ENCODE measurements at regions of chr20 and their contacts with region 1.

Region 1: GRCh38 chr20:59042796-59043660 is 442 bp upstream of the PRELID3B start:
- DNase-seq: peak; percentile 88
- H3K4me3 ChIP-seq: peak overlapping the region; percentile 45 to 84 (median 76)
- H3K27ac ChIP-seq: peak overlapping the region; percentile 64
- H3K4me1 ChIP-seq: peaks cover 20% of the 10 kb centered on the region
- H3K27me3 ChIP-seq: no peaks in the 10 kb centered on the region
- CTCF ChIP-seq: no peak

Region 2: GRCh38 chr20:59006864-59007664 is 36.0 kb before region 1 on chr20 and contains the start of gene CTSZ:
- CTCF ChIA-PET with region 1: no interaction called
- dilution Hi-C with region 1: loop called (anchors 5 kb)
- in situ Hi-C with region 1: no loop called
- intact Hi-C with region 1: no loop called
- DNase-seq: peak; percentile 13
- H3K4me3 ChIP-seq: peak within 1 kb of the TSS; percentile 53 to 70 (median 58)
- H3K27ac ChIP-seq: peak within 1 kb of the TSS; percentile 40
- H3K4me1 ChIP-seq: peaks cover 44% of the 10 kb centered on the region
- H3K27me3 ChIP-seq: no peaks in the 10 kb centered on the region
- CTCF ChIP-seq: peak in 1 of 2 donors; percentile 2
- total RNA-seq, gene CTSZ: 138 to 139 TPM

Region 3: GRCh38 chr20:59082077-59082740 is 39.2 kb after region 1 on chr20:
- CTCF ChIA-PET with region 1: no interaction called
- dilution Hi-C with region 1: no loop called
- in situ Hi-C with region 1: no loop called
- intact Hi-C with region 1: loop called (anchors 5 kb)
- DNase-seq: peak; percentile 35
- H3K4me3 ChIP-seq: no peak overlapping the region
- H3K27ac ChIP-seq: no peak overlapping the region
- H3K4me1 ChIP-seq: peaks cover 10% of the 10 kb centered on the region
- H3K27me3 ChIP-seq: peaks cover 7% of the 10 kb centered on the region
- CTCF ChIP-seq: peak; percentile 20 to 25

Region 4: GRCh38 chr20:59441860-59442845 is 399.1 kb after region 1 on chr20:
- CTCF ChIA-PET with region 1: no interaction called
- dilution Hi-C with region 1: no loop called
- in situ Hi-C with region 1: no loop called
- intact Hi-C with region 1: no loop called
- DNase-seq: no peak
- H3K4me3 ChIP-seq: no peak overlapping the region
- H3K27ac ChIP-seq: no peak overlapping the region
- H3K4me1 ChIP-seq: no peaks in the 10 kb centered on the region
- H3K27me3 ChIP-seq: no peaks in the 10 kb centered on the region
- CTCF ChIP-seq: no peak

Region 5: GRCh38 chr20:59661661-59662060 is 618.6 kb after region 1 on chr20:
- CTCF ChIA-PET with region 1: no interaction called
- dilution Hi-C with region 1: no loop called
- in situ Hi-C with region 1: no loop called
- intact Hi-C with region 1: no loop called
- DNase-seq: no peak
- H3K4me3 ChIP-seq: no peak overlapping the region
- H3K27ac ChIP-seq: no peak overlapping the region
- H3K4me1 ChIP-seq: no peaks in the 10 kb centered on the region
- H3K27me3 ChIP-seq: no peaks in the 10 kb centered on the region
- CTCF ChIP-seq: no peak

Measured in mammary epithelial cell (primary cell).